BJ (cell line): ENCODE measurements at regions of chr6 and their contacts with region 1.

Region 1: GRCh38 chr6:2353412-2354137 is 108.2 kb upstream of the GMDS start:
- DNase-seq: peak; percentile 23
- H3K4me3 ChIP-seq: no peak overlapping the region
- H3K27me3 ChIP-seq: no peaks in the 10 kb centered on the region
- CTCF ChIP-seq: peak; percentile 72

Region 2: DNA sequence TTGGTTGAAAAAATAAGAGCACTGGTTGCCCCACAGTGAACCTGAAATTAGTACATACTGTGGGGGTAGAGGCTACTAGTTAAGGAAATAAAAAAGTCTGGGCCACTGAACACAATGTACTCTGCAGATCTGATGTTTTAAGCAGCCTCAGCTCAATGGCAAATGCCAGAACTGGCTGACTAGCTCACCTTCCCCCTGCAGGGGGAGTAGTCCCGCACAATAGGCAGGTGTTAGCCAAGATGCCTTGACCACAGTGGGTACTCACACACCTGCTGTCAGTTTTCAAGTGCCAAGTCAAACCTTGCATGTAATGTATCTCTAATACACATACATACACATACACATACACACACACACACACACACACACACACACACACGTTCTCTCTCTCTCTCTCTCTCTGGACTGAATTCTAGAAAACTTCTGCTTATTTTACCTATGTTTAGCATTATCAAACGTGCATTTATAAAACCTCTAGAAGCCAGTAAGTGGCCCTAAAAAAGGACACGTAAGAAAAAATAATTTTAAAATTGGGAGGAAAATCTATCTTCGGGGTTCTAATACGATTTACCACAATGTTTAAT is 144.3 kb before region 1 on chr6:
- CTCF ChIA-PET with region 1: interaction called, 10 read pairs
- POLR2A ChIA-PET with region 1: no interaction called
- DNase-seq: no peak
- H3K4me3 ChIP-seq: no peak overlapping the region
- H3K27me3 ChIP-seq: no peaks in the 10 kb centered on the region
- CTCF ChIP-seq: peak; percentile 67

Region 3: DNA sequence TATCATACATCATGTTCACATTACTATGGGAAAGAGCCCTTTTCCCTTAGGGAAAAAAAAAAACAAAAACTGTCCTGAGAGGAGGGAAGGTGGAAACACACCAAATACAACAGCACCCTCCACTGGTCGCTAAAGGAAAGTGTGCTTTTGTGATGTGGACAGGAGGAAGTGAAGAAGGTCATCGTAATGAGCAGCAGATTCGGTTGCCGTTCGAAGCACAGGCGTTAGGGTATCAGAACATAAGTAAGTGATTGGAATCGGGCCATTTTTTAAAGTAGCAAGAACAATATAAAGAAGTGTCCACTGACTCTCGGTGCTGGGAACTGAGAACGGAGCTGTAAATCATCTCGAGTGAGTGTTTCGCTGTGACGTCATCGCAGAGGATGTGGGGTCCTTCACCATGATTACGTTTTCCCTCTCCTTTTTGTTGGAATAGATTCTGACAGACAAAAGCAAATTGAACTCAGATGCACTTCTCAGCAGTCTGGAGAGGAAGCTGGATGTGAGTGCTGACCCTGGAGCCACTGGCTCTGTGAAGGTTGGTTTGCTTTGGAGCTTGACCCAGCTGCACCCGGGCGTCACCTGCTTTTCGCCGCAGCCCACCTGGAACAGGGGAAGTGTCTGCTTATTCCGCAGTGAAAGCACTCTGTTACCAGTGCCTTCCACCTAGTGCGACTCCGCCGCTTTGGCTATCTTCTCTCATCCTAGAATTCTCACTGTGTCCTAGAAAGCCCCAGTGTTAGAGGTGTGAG is 95.4 kb after region 1 on chr6:
- CTCF ChIA-PET with region 1: interaction called, 23 read pairs
- POLR2A ChIA-PET with region 1: no interaction called
- DNase-seq: no peak
- H3K4me3 ChIP-seq: peak overlapping the region; percentile 34
- H3K27me3 ChIP-seq: 0 out of 2 replicates have a peak, but pooled peaks cover 5% of the 10 kb centered on the region
- CTCF ChIP-seq: peak; percentile 79